ENCODE measurements at regions of chr5 and their contacts with region 1.

Region 1: DNA sequence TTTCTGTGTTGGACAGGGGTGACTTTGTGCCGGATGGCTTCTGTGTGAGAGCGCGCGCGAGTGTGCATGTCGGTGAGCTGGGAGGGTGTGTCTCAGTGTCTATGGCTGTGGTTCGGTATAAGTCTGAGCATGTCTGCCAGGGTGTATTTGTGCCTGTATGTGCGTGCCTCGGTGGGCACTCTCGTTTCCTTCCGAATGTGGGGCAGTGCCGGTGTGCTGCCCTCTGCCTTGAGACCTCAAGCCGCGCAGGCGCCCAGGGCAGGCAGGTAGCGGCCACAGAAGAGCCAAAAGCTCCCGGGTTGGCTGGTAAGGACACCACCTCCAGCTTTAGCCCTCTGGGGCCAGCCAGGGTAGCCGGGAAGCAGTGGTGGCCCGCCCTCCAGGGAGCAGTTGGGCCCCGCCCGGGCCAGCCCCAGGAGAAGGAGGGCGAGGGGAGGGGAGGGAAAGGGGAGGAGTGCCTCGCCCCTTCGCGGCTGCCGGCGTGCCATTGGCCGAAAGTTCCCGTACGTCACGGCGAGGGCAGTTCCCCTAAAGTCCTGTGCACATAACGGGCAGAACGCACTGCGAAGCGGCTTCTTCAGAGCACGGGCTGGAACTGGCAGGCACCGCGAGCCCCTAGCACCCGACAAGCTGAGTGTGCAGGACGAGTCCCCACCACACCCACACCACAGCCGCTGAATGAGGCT is at the start of gene ADRB2:
- DNase-seq: peak; percentile 85
- H3K4me3 Mint-ChIP-seq: peak within 1 kb of the TSS; percentile 85
- H3K27ac Mint-ChIP-seq: peak within 1 kb of the TSS; percentile 62
- H3K4me1 Mint-ChIP-seq: peaks cover 18% of the 10 kb centered on the region
- H3K27me3 Mint-ChIP-seq: peaks cover 67% of the 10 kb centered on the region
- total RNA-seq, gene ADRB2: 0.21 and 0.30 TPM in 2 replicates

Region 2: DNA sequence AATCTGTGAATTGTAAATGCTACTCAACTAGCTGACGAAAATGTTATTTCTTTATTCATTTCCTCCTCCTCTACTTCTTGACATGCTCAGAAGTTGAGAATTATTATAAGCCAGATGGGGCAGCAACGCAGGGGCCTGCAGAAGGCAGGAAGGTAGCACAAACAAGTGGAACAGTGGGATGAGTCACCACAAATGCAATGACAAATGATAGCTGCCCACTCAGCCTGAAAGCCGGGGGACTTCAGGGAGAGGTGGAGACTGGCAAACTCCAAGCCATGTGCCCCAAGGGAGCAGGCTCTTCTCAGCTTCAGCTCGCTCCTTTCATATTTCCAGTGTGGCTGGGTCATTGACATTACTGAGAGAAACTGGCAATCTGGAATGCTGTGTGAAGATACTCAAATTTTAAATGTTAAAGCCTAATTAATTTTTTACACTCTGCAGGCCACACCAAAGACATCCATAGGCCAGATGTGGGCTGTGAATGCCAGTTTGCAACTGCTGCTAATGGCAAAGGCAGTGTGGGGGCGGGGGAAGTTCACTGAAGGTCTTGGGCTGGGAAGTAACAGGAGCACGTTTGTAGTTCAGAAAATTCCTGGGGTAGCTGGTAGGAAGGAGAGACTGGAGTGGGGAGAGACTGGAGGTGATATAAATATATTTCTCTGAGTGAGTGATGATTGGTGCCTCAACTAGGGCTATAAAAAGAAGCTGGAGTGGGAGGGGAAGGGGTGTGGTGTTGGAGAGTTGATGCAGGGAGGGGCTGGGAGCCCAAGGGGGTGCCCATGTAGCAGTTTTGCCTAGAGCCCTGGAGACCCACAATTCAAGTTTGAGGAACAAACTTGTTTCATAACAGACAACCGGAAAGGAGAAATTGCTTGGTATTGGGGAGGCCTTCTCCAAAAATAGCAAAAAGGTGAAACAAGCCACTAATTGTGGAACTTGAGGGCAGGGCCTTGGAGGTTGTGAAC is 20.6 kb before region 1 on chr5:
- intact Hi-C with region 1: loop called (anchors 2 kb)
- DNase-seq: no peak
- H3K4me3 Mint-ChIP-seq: peak overlapping the region; percentile 11
- H3K27ac Mint-ChIP-seq: peak overlapping the region; percentile 76
- H3K4me1 Mint-ChIP-seq: peaks cover 58% of the 10 kb centered on the region
- H3K27me3 Mint-ChIP-seq: no peaks in the 10 kb centered on the region

Region 3: GRCh38 chr5:148998174-148998797 is 172.1 kb after region 1 on chr5:
- intact Hi-C with region 1: loop called (anchors 10 kb)
- DNase-seq: no peak
- H3K4me3 Mint-ChIP-seq: no peak overlapping the region
- H3K27ac Mint-ChIP-seq: no peak overlapping the region
- H3K4me1 Mint-ChIP-seq: no peaks in the 10 kb centered on the region
- H3K27me3 Mint-ChIP-seq: peaks cover 20% of the 10 kb centered on the region

Region 4: GRCh38 chr5:149680810-149681221 is 854.6 kb after region 1 on chr5:
- intact Hi-C with region 1: no loop called
- DNase-seq: no peak
- H3K4me3 Mint-ChIP-seq: no peak overlapping the region
- H3K27ac Mint-ChIP-seq: no peak overlapping the region
- H3K4me1 Mint-ChIP-seq: no peaks in the 10 kb centered on the region
- H3K27me3 Mint-ChIP-seq: peaks cover 15% of the 10 kb centered on the region

Measured in activated T-helper 2 cell treated with anti-CD3 and anti-CD28 coated beads, Interferon-gamma antibody, Interleukin-2, Interleukin-4, amounts not matched to agents 10 μg/mL and 5 μg/mL and 100 μg/mL, durations not matched to agents 14 hours and 24 hours and 36 hours (primary cell).